PC-3 (cell line): ENCODE measurements at regions of chr1 and their contacts with region 1.

Region 1: DNA sequence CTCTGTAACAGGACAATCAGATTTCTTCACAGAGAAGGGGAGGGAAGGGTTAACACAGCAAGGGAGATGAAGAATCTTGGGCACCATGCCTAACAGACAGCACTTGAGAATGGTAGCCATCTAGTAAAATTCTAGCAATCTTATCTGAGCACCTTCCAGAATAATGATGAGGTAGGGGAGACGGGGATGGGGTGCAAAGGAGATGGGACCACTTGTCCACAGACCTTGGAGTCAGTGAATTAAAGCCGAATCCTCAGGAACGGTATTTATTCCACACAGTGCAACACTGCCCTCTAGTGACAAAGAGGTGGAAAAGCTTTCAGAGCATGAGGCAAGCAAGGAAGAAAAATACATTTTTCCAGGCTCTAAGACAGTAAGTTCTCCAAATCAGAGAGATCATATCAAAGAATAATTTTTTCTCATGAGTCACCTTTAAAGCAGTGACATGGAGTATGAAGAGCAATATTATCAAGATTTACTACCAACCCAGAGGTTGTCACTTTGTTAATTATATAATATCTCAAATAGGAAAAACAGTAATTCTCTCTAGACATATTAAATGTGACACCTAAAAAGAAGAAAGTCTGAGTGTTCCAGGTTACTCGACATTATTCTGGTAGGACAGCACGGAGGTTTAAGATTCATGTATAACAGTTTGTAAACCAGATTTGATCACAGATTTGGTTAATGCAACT is 43.3 kb upstream of the LPAR3 start:
- DNase-seq: peak; percentile 81
- ATAC-seq: peak; percentile 55
- H3K4me3 ChIP-seq: no peak overlapping the region
- H3K27ac ChIP-seq: 0 out of 2 replicates have a peak overlapping the region, but pooled peaks have one; percentile 4
- H3K4me1 ChIP-seq: peaks cover 32% of the 10 kb centered on the region
- H3K27me3 ChIP-seq: no peaks in the 10 kb centered on the region
- CTCF ChIP-seq: peak; percentile 95

Region 2: GRCh38 chr1:84506002-84506728 is 430.1 kb before region 1 on chr1 and contains the starts of genes GNG5 and SPATA1:
- CTCF ChIA-PET with region 1: no interaction called
- POLR2A ChIA-PET with region 1: no interaction called
- intact Hi-C with region 1: loop called (anchors 10 kb)
- DNase-seq: peak; percentile 96
- ATAC-seq: peak; percentile 81
- H3K4me3 ChIP-seq: peak within 1 kb of the TSS; percentile 83
- H3K27ac ChIP-seq: peak within 1 kb of the TSS; percentile 94
- H3K4me1 ChIP-seq: peaks cover 26% of the 10 kb centered on the region
- H3K27me3 ChIP-seq: no peaks in the 10 kb centered on the region
- CTCF ChIP-seq: no peak
- total RNA-seq, gene GNG5: 39.9 and 49.9 TPM in 2 replicates
- total RNA-seq, gene SPATA1: 2.9 TPM in 1 of 2 replicates, not detected in the other

Region 3: GRCh38 chr1:84620720-84621313 is 315.4 kb before region 1 on chr1:
- CTCF ChIA-PET with region 1: no interaction called
- POLR2A ChIA-PET with region 1: no interaction called
- intact Hi-C with region 1: loop called (anchors 5 kb)
- DNase-seq: peak; percentile 84
- ATAC-seq: peak; percentile 83
- H3K4me3 ChIP-seq: peak overlapping the region; percentile 81
- H3K27ac ChIP-seq: peak overlapping the region; percentile 84
- H3K4me1 ChIP-seq: peaks cover 24% of the 10 kb centered on the region
- H3K27me3 ChIP-seq: no peaks in the 10 kb centered on the region
- CTCF ChIP-seq: peak; percentile 98

Region 4: DNA sequence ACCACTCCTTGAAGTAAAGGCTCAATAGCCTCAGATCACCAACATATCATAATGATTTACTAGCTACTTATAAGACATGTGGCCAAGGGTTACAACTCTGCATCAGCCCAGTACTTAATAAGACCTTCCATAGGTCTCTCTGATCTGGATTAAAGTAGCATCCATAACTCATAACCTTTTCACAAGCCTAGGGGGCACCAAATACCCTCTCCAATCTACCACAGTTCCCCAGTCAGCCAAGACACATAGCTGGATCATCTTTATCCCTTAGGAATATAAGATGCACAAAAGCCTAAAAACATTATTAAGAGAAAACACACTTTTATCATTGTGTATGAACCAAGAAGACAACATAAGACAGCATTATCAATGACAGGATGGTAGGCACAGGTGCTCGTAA is 268.1 kb before region 1 on chr1:
- CTCF ChIA-PET with region 1: no interaction called
- POLR2A ChIA-PET with region 1: no interaction called
- intact Hi-C with region 1: loop called (anchors 1 kb)
- DNase-seq: peak; percentile 28
- ATAC-seq: peak; percentile 66; the same call in 1 of the 2 replicates
- H3K4me3 ChIP-seq: no peak overlapping the region
- H3K27ac ChIP-seq: no peak overlapping the region
- H3K4me1 ChIP-seq: 0 out of 2 replicates have a peak, but pooled peaks cover 6% of the 10 kb centered on the region
- H3K27me3 ChIP-seq: no peaks in the 10 kb centered on the region
- CTCF ChIP-seq: peak; percentile 62

Region 5: DNA sequence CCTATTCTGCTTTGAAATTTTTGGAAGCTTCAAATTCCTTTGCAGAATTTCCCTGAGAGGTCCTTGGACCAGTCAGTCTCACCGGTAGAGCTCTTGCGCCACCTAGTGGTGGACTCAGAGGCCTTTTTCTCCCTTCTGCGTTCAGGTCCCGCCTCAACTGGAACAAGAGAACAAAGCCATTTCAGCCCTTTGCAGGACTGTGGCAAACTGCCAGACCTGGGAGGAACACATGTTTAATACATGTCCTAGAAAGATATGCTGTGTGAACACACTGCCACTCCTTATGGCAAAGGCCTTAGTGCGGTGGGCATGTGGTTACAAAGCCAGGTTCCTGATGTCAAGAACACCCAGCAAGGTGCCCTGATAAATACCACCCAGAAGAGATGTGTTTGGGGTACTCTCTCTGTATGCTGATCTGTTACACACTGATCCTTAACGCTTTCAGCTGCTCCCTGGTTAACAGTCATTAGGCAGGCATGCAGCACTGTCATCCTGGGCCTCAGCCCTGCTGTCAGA is 163.8 kb before region 1 on chr1:
- CTCF ChIA-PET with region 1: no interaction called
- POLR2A ChIA-PET with region 1: no interaction called
- intact Hi-C with region 1: loop called (anchors 1 kb)
- DNase-seq: peak; percentile 92
- ATAC-seq: peak; percentile 31
- H3K4me3 ChIP-seq: no peak overlapping the region
- H3K27ac ChIP-seq: peak overlapping the region; percentile 99
- H3K4me1 ChIP-seq: peaks cover 49% of the 10 kb centered on the region
- H3K27me3 ChIP-seq: no peaks in the 10 kb centered on the region
- CTCF ChIP-seq: peak; percentile 93

Region 6: DNA sequence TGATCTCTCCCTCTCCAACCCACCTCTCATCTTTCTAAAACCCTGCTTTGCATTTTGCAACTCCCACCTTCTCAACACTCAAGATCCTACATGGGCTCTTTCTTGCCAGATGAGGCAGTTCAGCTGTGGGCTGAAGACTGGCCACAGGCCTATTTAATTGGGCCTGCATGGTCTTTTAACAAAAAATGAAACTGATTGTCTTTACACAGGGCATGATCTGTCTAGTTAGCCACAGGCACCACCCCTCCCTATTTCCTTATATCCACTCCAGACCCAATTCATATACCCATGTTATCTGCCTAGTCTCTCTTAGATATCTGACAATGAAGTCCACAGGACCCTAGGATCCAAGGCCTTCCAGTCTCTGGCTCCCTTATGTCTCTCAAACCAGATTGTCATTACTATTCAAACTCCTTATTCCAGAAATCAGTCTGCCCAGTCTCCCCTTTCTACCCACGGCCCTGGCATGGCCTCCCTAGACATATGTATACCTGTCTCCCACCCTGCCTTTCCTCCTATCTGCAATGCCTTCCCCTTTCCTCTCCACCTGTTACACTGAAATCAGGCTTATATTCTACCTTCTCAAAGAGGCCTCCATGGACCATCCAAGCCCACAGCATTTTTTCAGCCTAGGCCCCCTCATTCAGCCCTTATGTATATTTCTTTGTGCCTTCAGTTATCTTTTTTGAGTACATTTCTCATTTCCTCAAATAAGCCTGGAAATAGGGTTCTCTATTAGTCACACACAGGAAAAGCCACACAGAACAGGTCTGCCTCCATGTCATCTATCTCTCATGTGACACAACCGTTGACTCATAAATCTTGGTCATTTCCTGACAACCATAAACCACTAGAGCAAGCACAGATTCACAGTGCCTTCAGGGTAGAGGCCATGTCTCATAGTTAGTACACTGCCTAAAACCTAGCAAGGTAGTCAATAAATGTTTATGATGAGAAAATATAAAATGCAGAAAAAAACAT is 82.2 kb before region 1 on chr1:
- CTCF ChIA-PET with region 1: interaction called, 3 read pairs
- POLR2A ChIA-PET with region 1: no interaction called
- intact Hi-C with region 1: loop called (anchors 5 kb)
- DNase-seq: peak; percentile 97
- ATAC-seq: peak; percentile 92
- H3K4me3 ChIP-seq: no peak overlapping the region
- H3K27ac ChIP-seq: peak overlapping the region; percentile 96
- H3K4me1 ChIP-seq: peaks cover 56% of the 10 kb centered on the region
- H3K27me3 ChIP-seq: no peaks in the 10 kb centered on the region
- CTCF ChIP-seq: no peak